ENCODE measurements at regions of chr15 and their contacts with region 1.

Region 1: GRCh38 chr15:40440743-40441564 is at the start of gene BAHD1:
- DNase-seq: peak; percentile 84 to 96 (median 93)
- ATAC-seq: peak; percentile 84
- H3K4me3 ChIP-seq: peak within 1 kb of the TSS; percentile 71
- H3K4me3 Mint-ChIP-seq: peak within 1 kb of the TSS; percentile 95
- H3K27ac ChIP-seq: no peak within 1 kb of the TSS
- H3K27ac Mint-ChIP-seq: peak within 1 kb of the TSS; percentile 82
- H3K4me1 ChIP-seq: peaks cover 73% of the 10 kb centered on the region
- H3K4me1 Mint-ChIP-seq: peaks cover 76% of the 10 kb centered on the region
- H3K27me3 ChIP-seq: peaks cover 20 to 24% of the 10 kb centered on the region in 2 experiments
- H3K27me3 Mint-ChIP-seq: peaks cover 37% of the 10 kb centered on the region
- CTCF ChIP-seq: no peak
- total RNA-seq, gene BAHD1: 20.3 to 21.5 TPM

Region 2: GRCh38 chr15:40382580-40383456 is 58.1 kb before region 1 on chr15 and contains the start of gene KNSTRN:
- CTCF ChIA-PET with region 1: no interaction called
- POLR2A ChIA-PET with region 1: interaction called, 3 read pairs
- intact Hi-C with region 1: loop called in 1 of 2 experiments (anchors 2 kb)
- DNase-seq: peak; percentile 86 to 96 (median 90)
- ATAC-seq: peak; percentile 98
- H3K4me3 ChIP-seq: peak within 1 kb of the TSS; percentile 69
- H3K4me3 Mint-ChIP-seq: peak within 1 kb of the TSS; percentile 94
- H3K27ac ChIP-seq: no peak within 1 kb of the TSS
- H3K27ac Mint-ChIP-seq: no peak within 1 kb of the TSS
- H3K4me1 ChIP-seq: peaks cover 15% of the 10 kb centered on the region
- H3K4me1 Mint-ChIP-seq: peaks cover 15% of the 10 kb centered on the region
- H3K27me3 ChIP-seq: no peaks in the 10 kb centered on the region
- H3K27me3 Mint-ChIP-seq: no peaks in the 10 kb centered on the region
- CTCF ChIP-seq: no peak
- total RNA-seq, gene KNSTRN: 2.8 to 3.0 TPM

Region 3: DNA sequence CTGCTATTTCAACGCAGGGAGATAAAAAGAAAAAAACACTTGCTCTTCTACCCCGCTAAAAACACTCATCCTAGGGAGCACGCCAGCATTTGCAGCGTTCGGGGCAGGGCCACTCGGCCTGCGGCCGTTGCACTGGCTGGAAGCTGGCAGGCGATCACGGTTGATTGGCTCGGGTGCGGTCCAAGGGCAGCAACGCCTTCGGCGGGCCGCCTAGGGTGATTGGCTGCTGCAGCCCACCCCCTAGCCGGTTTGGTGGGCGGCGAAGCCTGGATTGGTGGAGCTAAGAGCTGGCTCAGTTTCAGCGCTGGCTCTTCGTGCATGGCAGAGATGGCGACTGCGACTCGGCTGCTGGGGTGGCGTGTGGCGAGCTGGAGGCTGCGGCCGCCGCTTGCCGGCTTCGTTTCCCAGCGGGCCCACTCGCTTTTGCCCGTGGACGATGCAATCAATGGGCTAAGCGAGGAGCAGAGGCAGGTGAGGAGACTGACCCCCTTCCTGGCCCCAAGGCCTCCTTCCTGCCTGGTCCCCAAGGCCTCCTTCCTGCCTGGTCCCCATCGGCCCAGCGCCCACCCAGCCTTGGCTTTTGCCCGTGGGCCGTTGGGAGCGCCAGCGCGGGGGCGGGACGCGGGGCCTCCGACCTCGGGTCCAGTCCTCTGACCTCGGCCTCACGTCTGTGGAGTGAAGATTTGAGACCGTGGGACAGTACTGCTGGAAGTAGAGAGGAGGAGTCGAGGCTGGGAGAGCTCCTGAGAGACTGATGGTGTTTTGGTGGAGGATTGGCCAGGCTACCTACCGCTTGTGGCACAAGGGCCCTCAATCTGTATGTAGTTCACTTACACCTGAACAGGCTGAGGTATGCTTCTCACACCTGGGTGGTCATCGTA is 35.2 kb before region 1 on chr15 and contains the start of gene IVD:
- CTCF ChIA-PET with region 1: interaction called, 5 read pairs
- POLR2A ChIA-PET with region 1: interaction called, 10 read pairs
- intact Hi-C with region 1: no loop called
- DNase-seq: peak; percentile 67 to 92 (median 82)
- ATAC-seq: peak; percentile 96
- H3K4me3 ChIP-seq: peak within 1 kb of the TSS; percentile 76
- H3K4me3 Mint-ChIP-seq: peak within 1 kb of the TSS; percentile 92
- H3K27ac ChIP-seq: peak within 1 kb of the TSS; percentile 35 to 60
- H3K27ac Mint-ChIP-seq: peak within 1 kb of the TSS; percentile 69
- H3K4me1 ChIP-seq: peaks cover 22% of the 10 kb centered on the region
- H3K4me1 Mint-ChIP-seq: peaks cover 39% of the 10 kb centered on the region
- H3K27me3 ChIP-seq: no peaks in the 10 kb centered on the region
- H3K27me3 Mint-ChIP-seq: no peaks in the 10 kb centered on the region
- CTCF ChIP-seq: no peak
- total RNA-seq, gene IVD: 30.7 to 31.9 TPM

Region 4: GRCh38 chr15:40454904-40455391 is 14.0 kb after region 1 on chr15:
- CTCF ChIA-PET with region 1: interaction called, 4 read pairs
- POLR2A ChIA-PET with region 1: interaction called, 106 read pairs
- intact Hi-C with region 1: no loop called
- DNase-seq: peak in 3 of 14 experiments; percentile 27 to 57 (median 35)
- ATAC-seq: peak; percentile 36
- H3K4me3 ChIP-seq: peak overlapping the region; percentile 14
- H3K4me3 Mint-ChIP-seq: peak overlapping the region; percentile 81
- H3K27ac ChIP-seq: peak overlapping the region; percentile 46 to 68
- H3K27ac Mint-ChIP-seq: peak overlapping the region; percentile 84
- H3K4me1 ChIP-seq: peaks cover 78% of the 10 kb centered on the region
- H3K4me1 Mint-ChIP-seq: peaks cover 77% of the 10 kb centered on the region
- H3K27me3 ChIP-seq: no peaks in the 10 kb centered on the region
- H3K27me3 Mint-ChIP-seq: no peaks in the 10 kb centered on the region
- CTCF ChIP-seq: no peak

Region 5: GRCh38 chr15:40469776-40470399 is 28.9 kb after region 1 on chr15:
- CTCF ChIA-PET with region 1: no interaction called
- POLR2A ChIA-PET with region 1: interaction called, 6 read pairs
- intact Hi-C with region 1: loop called in 1 of 2 experiments (anchors 2 kb)
- DNase-seq: peak in 1 of 14 experiments; percentile 13
- ATAC-seq: no peak
- H3K4me3 ChIP-seq: peak overlapping the region; percentile 58
- H3K4me3 Mint-ChIP-seq: peak overlapping the region; percentile 73
- H3K27ac ChIP-seq: peak overlapping the region; percentile 65 to 73
- H3K27ac Mint-ChIP-seq: peak overlapping the region; percentile 60
- H3K4me1 ChIP-seq: peaks cover 44% of the 10 kb centered on the region
- H3K4me1 Mint-ChIP-seq: peaks cover 26% of the 10 kb centered on the region
- H3K27me3 ChIP-seq: no peaks in the 10 kb centered on the region
- H3K27me3 Mint-ChIP-seq: no peaks in the 10 kb centered on the region
- CTCF ChIP-seq: no peak

Region 6: DNA sequence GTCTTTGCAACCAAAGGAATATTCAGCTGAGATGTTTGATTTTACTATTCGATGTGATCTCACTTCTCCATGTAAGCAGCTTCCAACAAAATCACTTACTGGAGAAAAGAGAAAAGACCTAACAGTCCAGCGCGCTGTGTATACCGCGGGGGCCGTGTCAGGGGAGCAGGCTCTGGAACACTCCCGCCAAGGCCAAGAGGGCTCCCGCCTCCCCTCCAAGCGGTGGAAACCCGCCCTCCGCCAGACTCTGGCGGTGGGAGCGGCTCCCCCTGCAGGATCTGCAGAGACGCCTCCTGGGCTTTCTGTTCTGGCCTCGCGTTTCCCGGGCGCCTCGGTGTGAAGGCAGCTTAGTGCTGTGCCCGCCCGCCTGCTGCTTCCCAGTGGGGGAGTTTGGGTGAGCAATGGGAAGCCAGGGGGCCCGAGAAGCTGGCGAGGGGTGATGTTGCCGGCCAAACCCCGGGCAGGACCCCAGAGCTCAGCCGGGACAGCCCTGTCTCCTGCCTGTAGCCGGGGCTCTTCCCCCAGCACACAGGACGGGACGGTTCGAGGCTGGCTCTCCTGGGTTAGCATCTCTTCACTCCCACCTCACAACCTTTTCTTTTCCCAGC is 66.1 kb after region 1 on chr15:
- CTCF ChIA-PET with region 1: interaction called, 13 read pairs
- POLR2A ChIA-PET with region 1: interaction called, 5 read pairs
- intact Hi-C with region 1: loop called in 1 of 2 experiments (anchors 1 kb)
- DNase-seq: peak; percentile 37 to 77 (median 60)
- ATAC-seq: peak; percentile 77
- H3K4me3 ChIP-seq: no peak overlapping the region
- H3K4me3 Mint-ChIP-seq: no peak overlapping the region
- H3K27ac ChIP-seq: no peak overlapping the region
- H3K27ac Mint-ChIP-seq: no peak overlapping the region
- H3K4me1 ChIP-seq: peaks cover 21% of the 10 kb centered on the region
- H3K4me1 Mint-ChIP-seq: peaks cover 27% of the 10 kb centered on the region
- H3K27me3 ChIP-seq: peaks cover 30 to 53% of the 10 kb centered on the region in 2 experiments
- H3K27me3 Mint-ChIP-seq: peaks cover 81% of the 10 kb centered on the region
- CTCF ChIP-seq: peak; percentile 70

Region 7: GRCh38 chr15:40564591-40565332 is 123.8 kb after region 1 on chr15 and contains the start of gene CCDC32:
- CTCF ChIA-PET with region 1: no interaction called
- POLR2A ChIA-PET with region 1: interaction called, 9 read pairs
- intact Hi-C with region 1: loop called in 1 of 2 experiments (anchors 2 kb)
- DNase-seq: peak; percentile 84 to 99 (median 92)
- ATAC-seq: peak; percentile 93
- H3K4me3 ChIP-seq: peak within 1 kb of the TSS; percentile 76
- H3K4me3 Mint-ChIP-seq: peak within 1 kb of the TSS; percentile 97
- H3K27ac ChIP-seq: peak within 1 kb of the TSS; percentile 85 to 89
- H3K27ac Mint-ChIP-seq: peak within 1 kb of the TSS; percentile 88
- H3K4me1 ChIP-seq: peaks cover 34% of the 10 kb centered on the region
- H3K4me1 Mint-ChIP-seq: peaks cover 43% of the 10 kb centered on the region
- H3K27me3 ChIP-seq: no peaks in the 10 kb centered on the region
- H3K27me3 Mint-ChIP-seq: no peaks in the 10 kb centered on the region
- CTCF ChIP-seq: no peak
- total RNA-seq, gene CCDC32: 20.9 to 21.3 TPM

Measured in CD4-positive, alpha-beta T cell (primary cell).